ENCODE measurements at regions of chr22 and their contacts with region 1.

Region 1: DNA sequence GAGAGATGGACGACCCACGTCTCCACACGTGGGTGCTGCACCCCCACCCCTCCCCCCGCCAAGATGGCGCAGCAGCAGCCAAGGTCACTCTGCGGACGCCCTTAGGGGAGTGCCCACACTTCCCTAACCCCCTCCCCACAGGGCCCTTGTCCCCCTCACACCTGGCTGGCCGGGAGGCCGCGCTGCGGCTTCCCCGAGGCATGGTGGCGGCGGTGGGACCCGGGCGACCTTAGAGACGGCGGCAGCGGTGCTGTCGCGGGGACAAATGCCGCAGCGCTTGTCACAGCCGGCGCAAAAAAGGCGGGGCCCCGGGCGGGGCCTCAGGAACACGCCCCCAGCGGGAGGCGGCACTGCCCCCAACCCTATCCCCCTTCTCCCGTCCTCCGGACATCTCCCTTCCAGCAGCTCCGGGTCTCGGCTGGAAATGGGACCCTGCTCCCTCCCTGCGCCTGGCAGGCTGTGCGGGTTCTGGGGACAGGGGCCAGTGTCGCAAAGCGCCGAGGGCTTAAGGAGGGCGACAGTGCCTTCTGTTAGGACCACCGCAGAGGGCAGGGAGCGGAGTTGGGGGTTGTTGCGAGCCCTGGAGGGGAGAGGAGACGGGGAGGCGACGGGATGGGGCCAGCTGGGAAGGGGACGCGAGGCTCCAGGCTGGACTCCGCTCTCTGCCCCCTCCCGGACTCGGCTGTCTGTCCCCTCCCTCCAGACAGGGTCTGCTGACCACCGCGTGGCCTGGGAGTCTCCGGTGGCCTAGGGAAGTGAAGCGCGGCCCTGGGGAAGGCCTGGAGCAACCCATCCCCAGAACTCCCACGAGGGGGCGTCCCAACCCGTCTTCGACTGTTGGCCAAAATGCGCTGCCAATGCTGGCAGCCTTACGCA is at the start of gene CHCHD10:
- DNase-seq: peak; percentile 90
- ATAC-seq: peak; percentile 83
- total RNA-seq, gene CHCHD10: 1,600 TPM

Region 2: GRCh38 chr22:23509571-23510305 is 258.2 kb before region 1 on chr22:
- intact Hi-C with region 1: no loop called
- DNase-seq: no peak
- ATAC-seq: no peak

Region 3: GRCh38 chr22:23849009-23850006 is 81.4 kb after region 1 on chr22:
- intact Hi-C with region 1: loop called (anchors 5 kb)
- DNase-seq: peak; percentile 90
- ATAC-seq: peak; percentile 71